Caco-2 (cell line): ENCODE measurements at regions of chr9 and their contacts with region 1.

Region 1: DNA sequence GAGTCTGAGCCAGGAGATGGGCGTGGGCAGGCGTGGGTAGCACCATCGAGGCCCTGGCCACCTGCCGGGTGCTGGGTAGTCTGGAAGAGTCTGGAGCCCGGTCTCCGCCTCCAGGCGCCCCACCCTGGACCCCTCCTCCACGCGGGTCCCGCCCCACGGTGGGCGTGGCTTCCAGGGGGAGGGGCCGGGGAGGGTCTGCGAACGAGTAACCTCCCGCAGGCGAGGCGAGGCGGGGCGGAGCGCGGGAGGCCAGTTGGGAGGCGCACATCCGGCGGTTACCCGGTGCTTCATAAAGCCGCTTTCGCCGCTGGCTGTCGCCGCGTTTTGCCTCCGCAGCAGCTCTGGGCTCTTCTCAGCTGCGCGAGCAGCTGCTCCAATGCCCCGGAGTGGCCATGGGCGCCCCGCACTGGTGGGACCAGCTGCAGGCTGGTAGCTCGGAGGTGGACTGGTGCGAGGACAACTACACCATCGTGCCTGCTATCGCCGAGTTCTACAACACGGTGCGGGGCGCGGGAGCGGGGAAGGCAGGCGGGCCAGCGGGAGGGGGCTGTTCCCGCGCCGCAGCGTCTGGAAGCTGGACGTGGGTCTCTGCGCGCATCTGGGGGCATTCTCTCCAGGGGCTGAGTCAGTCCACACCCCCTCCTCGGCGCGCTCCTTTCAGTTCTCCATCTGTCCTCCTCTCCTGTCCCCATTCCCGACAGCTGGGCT is at the start of gene ACER2:
- DNase-seq: peak; percentile 92 to 95
- H3K4me3 ChIP-seq: peak within 1 kb of the TSS; percentile 48
- H3K4me3 Mint-ChIP-seq: peak within 1 kb of the TSS; percentile 96
- H3K27ac Mint-ChIP-seq: peak within 1 kb of the TSS; percentile 55
- H3K4me1 ChIP-seq: peaks cover 19% of the 10 kb centered on the region; the same call in 1 of the 2 replicates
- H3K4me1 Mint-ChIP-seq: no peaks in the 10 kb centered on the region
- H3K27me3 ChIP-seq: no peaks in the 10 kb centered on the region
- H3K27me3 Mint-ChIP-seq: no peaks in the 10 kb centered on the region
- CTCF ChIP-seq: no peak
- total RNA-seq, gene ACER2: 2.4 and 2.5 TPM in 2 replicates

Region 2: DNA sequence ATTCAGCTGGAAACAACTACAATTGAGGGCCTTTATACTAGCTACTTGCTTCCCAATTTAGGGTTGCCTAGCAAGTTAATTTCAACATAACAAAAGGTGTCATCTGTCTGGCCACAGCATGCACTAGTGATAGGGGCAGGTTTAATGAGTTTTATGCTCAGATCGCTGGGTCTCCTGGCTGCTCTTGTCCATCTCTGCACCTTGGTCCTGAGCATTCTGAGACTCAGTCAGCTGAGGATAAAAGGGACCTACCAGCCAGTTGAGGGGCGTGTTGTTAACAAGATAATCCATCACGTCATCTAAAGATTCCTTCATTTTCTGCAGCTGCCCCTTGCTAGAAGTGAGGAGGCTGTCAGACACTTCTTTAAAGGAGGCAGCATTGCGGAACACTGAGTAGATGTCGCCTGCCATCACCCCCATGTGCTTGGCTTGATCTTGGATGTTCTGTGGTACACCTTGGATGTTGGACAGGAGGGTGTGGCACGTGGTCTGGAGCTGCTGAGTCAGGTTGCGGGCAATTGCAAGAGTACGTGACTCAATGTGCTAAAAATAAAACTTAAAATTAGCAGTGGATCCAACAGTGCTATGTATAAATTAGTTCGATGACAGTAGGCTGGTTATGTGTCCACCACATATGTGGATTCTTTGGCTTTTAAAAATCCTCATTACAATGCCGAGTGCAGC is 292.6 kb before region 1 on chr9:
- CTCF ChIA-PET with region 1: no interaction called
- POLR2A ChIA-PET with region 1: no interaction called
- intact Hi-C with region 1: no loop called
- DNase-seq: no peak
- H3K4me3 ChIP-seq: no peak overlapping the region
- H3K4me3 Mint-ChIP-seq: no peak overlapping the region
- H3K27ac Mint-ChIP-seq: no peak overlapping the region
- H3K4me1 ChIP-seq: no peaks in the 10 kb centered on the region; the same call in 1 of the 2 replicates
- H3K4me1 Mint-ChIP-seq: no peaks in the 10 kb centered on the region
- H3K27me3 ChIP-seq: no peaks in the 10 kb centered on the region
- H3K27me3 Mint-ChIP-seq: no peaks in the 10 kb centered on the region
- CTCF ChIP-seq: no peak

Region 3: DNA sequence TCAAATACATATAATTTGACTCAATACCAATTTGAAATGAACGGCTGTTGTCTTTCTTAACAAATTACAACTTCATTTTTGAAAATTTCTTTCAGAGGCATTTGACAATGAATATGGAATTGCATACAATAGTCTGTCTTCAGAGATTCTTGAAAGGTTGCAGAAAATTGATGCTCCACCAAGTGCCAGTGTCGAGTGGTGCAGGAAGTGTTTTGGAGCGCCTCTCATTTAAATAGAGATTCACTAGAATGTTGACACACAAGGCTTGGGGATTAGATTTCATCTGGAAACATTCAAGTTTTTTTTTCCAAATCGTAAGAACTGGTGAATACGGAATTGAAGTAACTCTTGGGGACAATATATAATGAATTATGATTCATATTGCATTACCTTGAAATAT is 36.9 kb before region 1 on chr9:
- CTCF ChIA-PET with region 1: no interaction called
- POLR2A ChIA-PET with region 1: no interaction called
- intact Hi-C with region 1: loop called (anchors 5 kb)
- DNase-seq: no peak
- H3K4me3 ChIP-seq: no peak overlapping the region
- H3K4me3 Mint-ChIP-seq: no peak overlapping the region
- H3K27ac Mint-ChIP-seq: no peak overlapping the region
- H3K4me1 ChIP-seq: peaks cover 3% of the 10 kb centered on the region; the same call in 1 of the 2 replicates
- H3K4me1 Mint-ChIP-seq: peaks cover 7% of the 10 kb centered on the region
- H3K27me3 ChIP-seq: no peaks in the 10 kb centered on the region
- H3K27me3 Mint-ChIP-seq: no peaks in the 10 kb centered on the region
- CTCF ChIP-seq: no peak

Region 4: GRCh38 chr9:19379697-19380046 is 29.2 kb before region 1 on chr9:
- CTCF ChIA-PET with region 1: no interaction called
- POLR2A ChIA-PET with region 1: no interaction called
- intact Hi-C with region 1: loop called (anchors 1 kb)
- DNase-seq: no peak
- H3K4me3 ChIP-seq: peak overlapping the region; percentile 71
- H3K4me3 Mint-ChIP-seq: peak overlapping the region; percentile 82
- H3K27ac Mint-ChIP-seq: peak overlapping the region; percentile 94
- H3K4me1 ChIP-seq: peaks cover 15% of the 10 kb centered on the region
- H3K4me1 Mint-ChIP-seq: peaks cover 23% of the 10 kb centered on the region
- H3K27me3 ChIP-seq: no peaks in the 10 kb centered on the region
- H3K27me3 Mint-ChIP-seq: no peaks in the 10 kb centered on the region
- CTCF ChIP-seq: no peak

Region 5: DNA sequence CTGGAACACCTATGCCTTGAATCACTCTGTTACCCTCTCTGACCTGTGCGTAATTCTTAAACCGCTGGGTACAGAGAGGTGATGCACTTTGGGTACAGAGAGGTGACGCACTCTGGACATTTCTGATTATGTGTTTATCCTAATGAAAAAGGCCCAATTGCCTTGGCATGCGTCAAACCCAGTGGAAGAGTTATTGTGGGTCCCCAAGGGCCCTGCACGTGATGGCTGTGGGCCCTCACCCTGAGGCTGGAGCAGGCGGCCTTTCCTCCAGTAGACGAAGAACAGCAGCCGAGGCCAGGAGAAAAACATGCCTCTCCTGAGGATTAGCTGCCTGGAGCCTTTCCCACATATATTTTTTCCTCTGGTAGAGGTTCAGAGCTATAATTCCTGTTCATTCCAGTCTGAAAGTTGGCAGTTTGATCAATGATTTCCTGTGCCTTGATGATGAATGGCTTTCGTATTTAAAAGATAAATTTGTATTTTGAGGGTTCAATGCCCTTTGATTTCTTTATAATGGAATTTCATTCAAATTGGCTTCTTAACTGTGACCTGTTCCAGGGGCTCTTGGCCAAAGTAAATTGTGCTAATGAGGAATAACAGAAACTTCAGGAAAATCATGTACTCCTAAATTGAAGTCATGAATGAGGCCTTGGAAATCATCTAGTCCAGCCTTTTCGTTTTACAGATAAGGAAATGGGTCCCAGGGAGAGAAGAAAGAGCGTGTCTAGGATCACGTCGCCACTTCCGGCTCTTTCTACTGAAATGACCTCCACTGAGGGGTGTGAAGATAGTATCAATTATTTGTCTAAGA is 22.7 kb after region 1 on chr9:
- CTCF ChIA-PET with region 1: no interaction called
- POLR2A ChIA-PET with region 1: no interaction called
- intact Hi-C with region 1: no loop called
- DNase-seq: no peak
- H3K4me3 ChIP-seq: no peak overlapping the region
- H3K4me3 Mint-ChIP-seq: no peak overlapping the region
- H3K27ac Mint-ChIP-seq: no peak overlapping the region
- H3K4me1 ChIP-seq: no peaks in the 10 kb centered on the region
- H3K4me1 Mint-ChIP-seq: peaks cover 8% of the 10 kb centered on the region
- H3K27me3 ChIP-seq: no peaks in the 10 kb centered on the region
- H3K27me3 Mint-ChIP-seq: no peaks in the 10 kb centered on the region
- CTCF ChIP-seq: no peak

Region 6: GRCh38 chr9:19732441-19732951 is 323.6 kb after region 1 on chr9:
- CTCF ChIA-PET with region 1: no interaction called
- POLR2A ChIA-PET with region 1: no interaction called
- intact Hi-C with region 1: no loop called
- DNase-seq: no peak
- H3K4me3 ChIP-seq: no peak overlapping the region
- H3K4me3 Mint-ChIP-seq: no peak overlapping the region
- H3K27ac Mint-ChIP-seq: no peak overlapping the region
- H3K4me1 ChIP-seq: no peaks in the 10 kb centered on the region
- H3K4me1 Mint-ChIP-seq: no peaks in the 10 kb centered on the region
- H3K27me3 ChIP-seq: no peaks in the 10 kb centered on the region
- H3K27me3 Mint-ChIP-seq: no peaks in the 10 kb centered on the region
- CTCF ChIP-seq: no peak